Aorta (tissue), 5 donors: ENCODE measurements at regions of chr6 and their contacts with region 1.

Region 1: DNA sequence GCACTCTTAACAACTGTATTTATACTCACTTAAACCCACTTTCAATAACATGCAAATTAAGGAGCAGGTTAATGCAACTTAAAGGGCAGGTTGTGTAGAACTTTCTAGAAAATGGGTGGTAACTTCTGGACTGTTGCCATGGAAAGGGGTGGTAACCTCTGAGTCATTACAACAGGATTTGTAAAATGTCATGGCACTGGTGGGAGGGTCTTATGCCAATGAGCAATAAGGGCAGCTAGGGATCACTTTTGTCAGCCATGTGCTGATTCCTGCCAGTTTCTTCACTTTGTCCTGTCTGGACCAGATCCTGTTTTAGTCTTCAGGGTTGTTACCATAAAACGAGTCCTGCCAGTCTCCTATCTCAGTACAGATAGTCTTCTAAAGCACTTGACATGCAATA is 560.5 kb upstream of the PTCHD4 start:
- DNase-seq: no peak
- ATAC-seq: no peak
- H3K4me3 ChIP-seq: no peak overlapping the region
- H3K27ac ChIP-seq: no peak overlapping the region
- H3K4me1 ChIP-seq: no peaks in the 10 kb centered on the region
- H3K27me3 ChIP-seq: no peaks in the 10 kb centered on the region

Region 2: GRCh38 chr6:48243071-48243470 is 428.4 kb before region 1 on chr6:
- intact Hi-C with region 1: no loop called
- DNase-seq: no peak
- ATAC-seq: no peak
- H3K4me3 ChIP-seq: no peak overlapping the region
- H3K27ac ChIP-seq: no peak overlapping the region
- H3K4me1 ChIP-seq: no peaks in the 10 kb centered on the region
- H3K27me3 ChIP-seq: no peaks in the 10 kb centered on the region

Region 3: GRCh38 chr6:48736501-48737206 is 65.1 kb after region 1 on chr6:
- intact Hi-C with region 1: loop called in 1 of 2 experiments (anchors 5 kb)
- DNase-seq: no peak
- ATAC-seq: no peak
- H3K4me3 ChIP-seq: no peak overlapping the region
- H3K27ac ChIP-seq: no peak overlapping the region
- H3K4me1 ChIP-seq: no peaks in the 10 kb centered on the region
- H3K27me3 ChIP-seq: no peaks in the 10 kb centered on the region